WTC11 (cell line): ENCODE measurements at regions of chrX and their contacts with region 1.

Region 1: GRCh38 chrX:68828740-68829552 is at the start of gene EFNB1:
- DNase-seq: peak; percentile 87
- ATAC-seq: peak; percentile 85
- H3K4me3 Mint-ChIP-seq: peak within 1 kb of the TSS; percentile 72
- H3K27ac Mint-ChIP-seq: no peak within 1 kb of the TSS
- H3K4me1 Mint-ChIP-seq: peaks cover 19% of the 10 kb centered on the region
- H3K27me3 Mint-ChIP-seq: peaks cover 99% of the 10 kb centered on the region
- CTCF ChIP-seq: no peak
- total RNA-seq, gene EFNB1: 9.7 to 16.4 TPM (median 10.0 TPM) in 3 replicates

Region 2: DNA sequence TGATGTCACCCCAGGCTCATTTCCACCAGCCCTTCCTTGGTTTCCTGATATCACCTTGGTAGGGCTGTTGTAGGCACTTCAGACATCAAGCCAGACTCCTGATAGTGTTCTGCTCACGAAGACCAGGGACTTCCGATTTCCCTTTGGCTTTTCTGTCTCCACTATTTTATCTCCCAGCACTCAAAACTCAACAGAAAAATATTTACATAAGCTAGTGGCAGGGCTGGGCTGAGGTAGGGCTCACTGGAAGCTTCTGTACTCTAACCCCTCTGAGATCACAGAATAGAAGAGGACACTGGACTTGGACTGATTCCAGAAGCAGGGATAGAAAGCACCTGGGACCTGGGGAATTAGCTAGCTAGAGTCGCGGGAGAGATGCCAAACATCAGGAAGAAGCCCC is 34.5 kb before region 1 on chrX:
- CTCF ChIA-PET with region 1: no interaction called
- POLR2A ChIA-PET with region 1: no interaction called
- DNase-seq: no peak
- ATAC-seq: no peak
- H3K4me3 Mint-ChIP-seq: no peak overlapping the region
- H3K27ac Mint-ChIP-seq: no peak overlapping the region
- H3K4me1 Mint-ChIP-seq: no peaks in the 10 kb centered on the region
- H3K27me3 Mint-ChIP-seq: peaks cover 14% of the 10 kb centered on the region
- CTCF ChIP-seq: no peak

Region 3: DNA sequence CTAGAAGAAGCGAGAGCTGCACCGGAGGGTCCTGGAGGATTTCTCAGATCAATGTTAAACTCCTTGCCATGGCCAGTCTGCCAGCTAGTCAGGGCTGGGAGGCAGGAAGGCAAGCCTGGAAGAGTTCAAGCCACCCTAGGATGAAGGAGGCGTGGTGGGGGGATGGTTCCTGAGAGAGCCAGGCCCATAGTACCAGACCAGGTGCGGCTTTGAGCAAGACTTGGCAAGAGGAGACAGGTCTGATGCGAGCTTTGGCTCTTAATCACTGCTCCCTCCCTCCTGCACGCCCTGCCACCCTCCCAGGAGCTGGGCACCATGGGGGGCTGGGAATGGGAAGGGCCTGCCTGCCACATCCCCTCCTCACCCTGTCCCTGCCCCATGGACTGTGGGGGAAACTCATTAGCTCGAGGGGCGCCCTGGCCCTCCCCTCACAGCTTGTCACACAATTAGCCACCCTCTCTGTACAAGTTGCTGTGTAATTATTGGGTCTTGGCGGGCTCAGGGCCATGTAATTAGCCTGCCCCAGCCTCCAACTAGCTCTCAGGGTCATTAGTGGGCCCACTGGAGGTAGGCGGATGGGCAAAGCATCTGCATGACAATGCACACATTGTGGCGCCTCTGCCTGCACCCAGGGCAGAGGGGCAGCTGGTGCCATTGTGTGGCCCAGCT is 50.2 kb after region 1 on chrX:
- CTCF ChIA-PET with region 1: interaction called, 23 read pairs
- POLR2A ChIA-PET with region 1: no interaction called
- DNase-seq: no peak
- ATAC-seq: no peak
- H3K4me3 Mint-ChIP-seq: no peak overlapping the region
- H3K27ac Mint-ChIP-seq: no peak overlapping the region
- H3K4me1 Mint-ChIP-seq: peaks cover 49% of the 10 kb centered on the region
- H3K27me3 Mint-ChIP-seq: peaks cover 3% of the 10 kb centered on the region; the same call in 1 of the 2 replicates
- CTCF ChIP-seq: no peak

Region 4: DNA sequence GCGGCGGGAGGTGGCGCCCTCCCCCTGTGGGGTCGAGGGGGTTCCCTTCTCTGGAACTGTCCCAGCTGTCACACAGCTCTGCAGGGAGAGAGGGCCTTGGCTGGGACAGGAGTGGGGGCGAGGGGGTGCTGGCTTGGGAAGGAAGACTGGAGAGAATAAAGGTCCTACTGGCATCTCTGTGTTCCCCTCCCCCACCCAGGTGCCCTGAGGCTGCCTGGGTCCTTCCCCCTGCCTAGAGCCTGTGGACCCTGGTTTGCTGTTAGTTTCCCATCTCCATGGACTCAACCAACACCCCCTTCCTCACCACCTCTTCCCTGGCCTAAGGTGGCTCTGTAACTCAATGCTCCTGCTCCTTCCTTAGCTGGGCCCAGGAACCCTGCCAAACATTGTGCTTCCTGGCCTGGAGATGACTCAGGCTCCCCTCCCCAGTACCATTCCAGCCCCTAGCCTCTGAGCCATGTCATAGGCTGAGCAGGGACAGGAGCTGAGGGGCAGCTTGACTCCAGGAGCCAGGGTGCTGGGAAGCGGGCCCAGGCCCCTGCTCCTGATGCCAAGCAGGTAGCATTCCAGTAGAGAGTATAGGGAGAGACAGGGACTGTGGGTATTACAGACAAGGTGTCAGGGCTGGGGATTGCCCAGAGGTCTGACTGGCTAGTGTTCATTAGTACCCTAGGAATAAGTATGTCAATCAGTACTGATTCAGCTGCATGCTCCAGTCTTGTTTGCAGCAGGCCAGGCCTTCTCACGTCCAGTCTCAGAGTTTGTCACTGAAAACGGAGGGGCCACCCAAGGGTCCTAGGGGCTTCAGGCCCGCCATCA is 100.6 kb after region 1 on chrX:
- CTCF ChIA-PET with region 1: interaction called, 24 read pairs
- POLR2A ChIA-PET with region 1: no interaction called
- DNase-seq: no peak
- ATAC-seq: no peak
- H3K4me3 Mint-ChIP-seq: no peak overlapping the region
- H3K27ac Mint-ChIP-seq: no peak overlapping the region
- H3K4me1 Mint-ChIP-seq: peaks cover 5% of the 10 kb centered on the region
- H3K27me3 Mint-ChIP-seq: no peaks in the 10 kb centered on the region
- CTCF ChIP-seq: no peak

Region 5: GRCh38 chrX:68989865-68990606 is 161.1 kb after region 1 on chrX:
- CTCF ChIA-PET with region 1: interaction called, 10 read pairs
- POLR2A ChIA-PET with region 1: no interaction called
- DNase-seq: peak; percentile 72
- ATAC-seq: peak; percentile 96
- H3K4me3 Mint-ChIP-seq: no peak overlapping the region
- H3K27ac Mint-ChIP-seq: no peak overlapping the region
- H3K4me1 Mint-ChIP-seq: peaks cover 11% of the 10 kb centered on the region
- H3K27me3 Mint-ChIP-seq: peaks cover 4% of the 10 kb centered on the region
- CTCF ChIP-seq: no peak

Region 6: GRCh38 chrX:69066966-69067525 is 238.1 kb after region 1 on chrX:
- CTCF ChIA-PET with region 1: interaction called, 40 read pairs
- POLR2A ChIA-PET with region 1: no interaction called
- DNase-seq: no peak
- ATAC-seq: no peak
- H3K4me3 Mint-ChIP-seq: no peak overlapping the region
- H3K27ac Mint-ChIP-seq: no peak overlapping the region
- H3K4me1 Mint-ChIP-seq: peaks cover 9% of the 10 kb centered on the region
- H3K27me3 Mint-ChIP-seq: peaks cover 3% of the 10 kb centered on the region
- CTCF ChIP-seq: no peak

Region 7: GRCh38 chrX:69128576-69128975 is 299.6 kb after region 1 on chrX:
- CTCF ChIA-PET with region 1: interaction called, 12 read pairs
- POLR2A ChIA-PET with region 1: no interaction called
- DNase-seq: peak; percentile 51
- ATAC-seq: peak; percentile 80
- H3K4me3 Mint-ChIP-seq: peak overlapping the region; percentile 45; the same call in 1 of the 2 replicates
- H3K27ac Mint-ChIP-seq: no peak overlapping the region
- H3K4me1 Mint-ChIP-seq: peaks cover 30% of the 10 kb centered on the region
- H3K27me3 Mint-ChIP-seq: peaks cover 42% of the 10 kb centered on the region
- CTCF ChIP-seq: no peak

Region 8: DNA sequence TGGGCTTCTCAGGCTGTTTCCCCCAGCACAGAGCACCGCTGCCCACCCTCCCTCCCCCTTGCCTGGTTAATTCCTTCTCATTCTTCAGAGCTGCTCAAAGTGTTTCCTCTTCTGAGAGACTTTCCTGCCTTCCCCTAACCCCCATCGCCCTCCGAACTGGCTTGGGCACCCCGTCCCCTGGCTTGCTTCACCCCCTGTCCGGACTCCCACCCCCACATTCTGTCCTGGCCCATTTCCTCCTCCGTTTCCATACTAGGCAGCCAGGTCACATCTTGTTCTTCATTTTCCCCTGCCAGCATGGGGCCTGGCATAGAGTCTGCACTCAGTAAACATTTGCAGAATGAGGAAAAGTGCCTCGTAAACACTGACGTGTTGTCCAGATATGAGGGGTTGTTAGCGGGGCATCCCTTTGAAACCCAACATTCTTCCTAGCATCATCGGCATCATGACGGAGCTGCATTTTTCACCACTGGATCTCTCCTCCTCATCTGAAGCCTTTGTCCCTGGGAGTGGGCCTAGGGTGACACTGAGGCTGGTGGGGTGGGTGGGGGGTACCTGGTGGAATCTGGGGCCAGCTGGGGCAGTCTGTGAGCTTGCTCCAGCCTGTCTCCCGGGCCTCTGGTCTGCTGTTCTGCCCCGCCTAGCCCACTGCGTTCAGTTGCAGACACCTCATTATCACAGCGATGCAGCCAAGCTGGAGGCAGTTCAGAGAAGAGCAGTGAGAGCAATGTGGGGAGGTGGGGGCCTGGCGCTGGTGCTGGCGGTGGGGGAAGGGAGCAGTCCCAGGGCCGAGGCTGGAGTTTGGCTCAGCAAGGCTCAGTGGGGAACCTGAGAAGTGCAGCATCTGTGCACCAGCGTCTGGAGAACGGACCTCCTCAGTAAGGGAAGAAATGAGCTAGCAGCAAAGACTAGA is 485.7 kb after region 1 on chrX:
- CTCF ChIA-PET with region 1: no interaction called
- POLR2A ChIA-PET with region 1: no interaction called
- DNase-seq: no peak
- ATAC-seq: peak; percentile 37
- H3K4me3 Mint-ChIP-seq: no peak overlapping the region
- H3K27ac Mint-ChIP-seq: no peak overlapping the region
- H3K4me1 Mint-ChIP-seq: peaks cover 49% of the 10 kb centered on the region
- H3K27me3 Mint-ChIP-seq: peaks cover 18% of the 10 kb centered on the region
- CTCF ChIP-seq: no peak

Region 9: DNA sequence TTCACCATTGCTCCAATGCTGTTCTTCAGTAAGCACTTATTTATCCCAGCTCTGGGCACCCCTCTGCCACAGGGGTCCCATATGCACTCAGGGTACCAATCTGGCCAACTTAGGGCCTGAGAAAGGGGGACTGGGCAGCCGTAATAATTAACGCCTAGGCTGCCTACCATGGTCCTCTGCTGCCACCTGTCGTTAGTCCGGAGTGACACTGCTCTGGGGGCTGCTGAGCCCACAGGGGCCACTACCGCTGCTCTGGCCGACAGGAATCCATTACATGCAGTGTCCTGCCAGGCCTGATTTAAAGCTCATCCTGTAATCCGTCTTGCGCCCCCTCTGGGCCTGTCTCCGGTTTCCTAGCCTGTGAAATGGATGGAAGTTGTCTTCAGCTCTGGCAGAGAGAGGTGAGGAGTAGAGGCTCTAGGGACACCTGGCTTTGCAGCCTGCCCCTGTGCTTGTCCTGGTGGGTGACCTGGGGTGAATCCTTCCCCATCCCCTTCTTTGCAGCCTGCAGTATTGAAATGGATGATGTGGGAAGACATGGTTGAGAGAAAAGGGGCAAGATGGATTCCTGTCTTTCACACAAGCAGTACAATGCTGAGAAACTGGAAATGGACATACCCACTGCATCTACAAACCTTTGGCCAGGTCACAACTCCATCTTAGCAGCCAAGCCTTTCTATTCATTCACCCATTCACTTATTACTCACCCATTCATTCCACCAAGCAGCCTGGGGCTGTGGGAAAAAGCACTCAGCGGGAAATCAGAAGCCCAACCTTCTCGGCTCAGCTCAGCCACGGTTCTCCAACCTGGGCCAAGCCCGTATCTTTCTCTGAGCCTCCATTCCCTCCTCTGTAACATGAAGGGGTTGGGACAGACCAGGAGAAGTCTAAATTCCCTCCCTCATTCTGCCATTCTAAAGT is 558.9 kb after region 1 on chrX:
- CTCF ChIA-PET with region 1: interaction called, 49 read pairs
- POLR2A ChIA-PET with region 1: no interaction called
- DNase-seq: peak; percentile 82
- ATAC-seq: peak; percentile 98
- H3K4me3 Mint-ChIP-seq: no peak overlapping the region
- H3K27ac Mint-ChIP-seq: no peak overlapping the region
- H3K4me1 Mint-ChIP-seq: peaks cover 23% of the 10 kb centered on the region
- H3K27me3 Mint-ChIP-seq: peaks cover 28% of the 10 kb centered on the region
- CTCF ChIP-seq: peak; percentile 63